Activated naive CD4-positive, alpha-beta T cell treated with anti-CD3 and anti-CD28 coated beads for 36 hours (primary cell): ENCODE measurements at regions of chr4 and their contacts with region 1.

Region 1: GRCh38 chr4:133146574-133147241 is 2.4 kb upstream of the PCDH10 start:
- DNase-seq: peak; percentile 48
- H3K4me3 Mint-ChIP-seq: no peak overlapping the region
- H3K27ac Mint-ChIP-seq: no peak overlapping the region
- H3K4me1 Mint-ChIP-seq: peaks cover 15% of the 10 kb centered on the region
- H3K27me3 Mint-ChIP-seq: peaks cover 60% of the 10 kb centered on the region

Region 2: DNA sequence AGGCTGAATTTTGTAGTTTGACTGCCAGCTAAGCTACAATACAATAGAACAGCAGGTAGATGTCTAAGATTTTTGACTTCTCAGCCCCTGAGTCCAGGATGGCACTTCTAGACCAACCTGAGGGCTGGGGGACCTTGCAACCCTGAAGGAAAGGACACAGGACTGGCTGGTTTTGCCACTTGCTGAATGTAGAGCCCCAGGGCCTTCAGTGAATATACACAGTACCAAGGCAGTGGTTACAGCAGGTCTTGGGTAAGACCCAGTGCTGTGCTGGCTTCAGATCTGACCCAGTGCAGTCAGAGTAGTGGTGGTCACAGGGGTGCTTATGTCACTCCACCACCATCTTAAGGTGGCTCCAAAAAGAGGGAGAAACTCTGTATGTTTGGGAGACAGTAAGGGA is 275.1 kb before region 1 on chr4:
- CTCF ChIA-PET with region 1: no interaction called
- intact Hi-C with region 1: no loop called
- DNase-seq: no peak
- H3K4me3 Mint-ChIP-seq: no peak overlapping the region
- H3K27ac Mint-ChIP-seq: no peak overlapping the region
- H3K4me1 Mint-ChIP-seq: no peaks in the 10 kb centered on the region
- H3K27me3 Mint-ChIP-seq: no peaks in the 10 kb centered on the region

Region 3: GRCh38 chr4:134935320-134935719 is 1788.6 kb after region 1 on chr4:
- CTCF ChIA-PET with region 1: no interaction called
- intact Hi-C with region 1: loop called (anchors 2 kb)
- DNase-seq: peak; percentile 29
- H3K4me3 Mint-ChIP-seq: no peak overlapping the region
- H3K27ac Mint-ChIP-seq: no peak overlapping the region
- H3K4me1 Mint-ChIP-seq: no peaks in the 10 kb centered on the region
- H3K27me3 Mint-ChIP-seq: no peaks in the 10 kb centered on the region